Activated naive CD4-positive, alpha-beta T cell treated with anti-CD3 and anti-CD28 coated beads, Interleukin-2, amount 10 ng/mL, durations not matched to agents 7 days and 5 days (primary cell): ENCODE measurements at regions of chr12 and their contacts with region 1.

Region 1: DNA sequence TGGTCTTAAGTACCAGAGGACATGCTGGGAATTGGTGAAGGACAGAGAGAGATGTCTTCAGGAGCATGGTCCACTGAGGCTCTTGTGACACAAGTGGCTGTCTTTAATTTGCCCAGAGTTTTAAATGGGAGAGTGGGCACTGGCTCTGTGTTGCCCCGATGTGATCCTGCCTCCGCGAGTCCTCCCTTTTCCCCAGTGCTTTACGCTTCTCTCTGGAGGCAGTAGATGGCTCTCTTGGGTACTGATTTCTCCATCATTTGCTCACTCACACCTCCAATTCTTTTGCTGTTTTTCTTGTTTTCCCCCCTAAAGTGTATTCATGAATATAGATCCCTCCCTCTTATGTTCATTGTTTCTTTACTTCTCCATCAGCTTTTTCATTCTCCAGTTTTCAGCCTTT is 74.3 kb downstream of the EMP1 start:
- DNase-seq: no peak
- H3K4me3 Mint-ChIP-seq: no peak overlapping the region
- H3K27ac Mint-ChIP-seq: no peak overlapping the region
- H3K4me1 Mint-ChIP-seq: no peaks in the 10 kb centered on the region
- H3K27me3 Mint-ChIP-seq: peaks cover 34% of the 10 kb centered on the region

Region 2: DNA sequence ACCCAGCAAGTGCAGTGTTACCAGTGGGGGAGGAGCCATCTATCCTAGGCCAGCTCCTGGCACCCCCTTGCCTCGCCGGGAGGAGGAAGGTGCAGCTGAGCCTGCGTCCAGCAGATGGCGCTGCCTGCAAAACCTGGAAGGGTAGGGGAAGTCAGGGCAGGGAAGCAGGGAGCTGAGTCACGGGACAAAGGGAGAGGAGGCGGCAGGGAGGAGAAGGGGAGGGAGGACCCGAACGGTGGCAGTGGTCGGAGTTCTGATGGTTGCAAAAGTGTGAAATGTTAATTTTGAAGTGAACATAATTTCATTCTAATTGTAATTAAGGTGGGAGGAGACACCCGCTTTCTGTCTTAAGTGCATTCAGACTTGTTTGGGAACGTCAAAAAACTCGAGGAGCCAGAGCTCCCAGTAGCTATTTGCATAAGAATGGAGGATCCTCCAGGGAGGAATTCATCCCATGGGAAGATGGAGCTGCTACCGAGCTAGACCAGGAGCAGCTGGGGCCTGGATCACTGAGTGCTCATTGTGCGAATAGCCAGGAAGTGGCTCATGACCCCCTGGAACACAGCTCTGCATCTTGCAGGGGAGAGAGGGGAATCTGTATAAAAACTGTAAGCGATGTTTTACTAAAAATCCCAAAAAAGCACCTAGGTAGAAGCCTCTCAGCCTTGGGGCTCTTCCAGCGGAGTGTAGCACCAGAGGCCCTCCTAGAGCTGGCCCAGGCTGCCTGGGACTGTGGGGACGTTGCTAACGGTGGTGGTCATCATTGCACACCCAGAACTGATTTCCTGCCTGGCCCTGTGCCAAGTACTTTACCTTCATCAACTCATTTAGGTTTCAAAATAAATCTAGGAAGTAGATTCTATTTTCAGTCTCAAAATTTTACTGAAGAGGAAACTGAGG is 14.8 kb before region 1 on chr12:
- CTCF ChIA-PET with region 1: interaction called, 11 read pairs
- DNase-seq: peak; percentile 85
- H3K4me3 Mint-ChIP-seq: no peak overlapping the region
- H3K27ac Mint-ChIP-seq: no peak overlapping the region
- H3K4me1 Mint-ChIP-seq: peaks cover 2% of the 10 kb centered on the region
- H3K27me3 Mint-ChIP-seq: peaks cover 11% of the 10 kb centered on the region

Region 3: DNA sequence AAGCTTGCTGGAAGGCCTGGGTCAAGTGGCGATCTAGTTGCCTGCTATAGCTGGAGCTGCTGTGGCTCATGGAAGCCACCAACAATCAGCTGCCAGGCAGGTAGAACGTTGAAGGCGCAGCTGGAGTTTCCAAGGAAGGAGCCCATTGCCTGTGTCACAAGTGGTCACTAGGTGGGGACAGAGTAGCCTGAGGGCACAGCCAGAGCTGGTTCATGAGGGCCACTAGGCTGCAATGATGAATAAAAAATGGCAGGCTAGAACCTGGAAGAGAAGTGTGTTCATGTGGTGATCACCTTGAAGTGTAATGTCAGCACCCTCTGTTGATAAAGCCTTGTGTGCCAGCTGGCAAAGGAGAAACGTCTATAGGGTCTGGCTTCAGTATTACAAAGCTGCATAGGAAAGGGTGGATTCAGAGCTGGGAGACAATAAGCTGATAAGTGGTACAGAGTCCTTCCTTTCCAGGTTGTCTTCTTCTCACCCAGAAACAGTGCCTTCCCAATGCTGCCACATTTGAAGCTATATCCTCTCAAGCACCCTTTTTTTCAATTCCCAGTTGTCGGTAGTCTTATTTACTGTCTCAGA is 91.5 kb after region 1 on chr12:
- CTCF ChIA-PET with region 1: no interaction called
- DNase-seq: peak; percentile 66
- H3K4me3 Mint-ChIP-seq: no peak overlapping the region
- H3K27ac Mint-ChIP-seq: no peak overlapping the region
- H3K4me1 Mint-ChIP-seq: no peaks in the 10 kb centered on the region
- H3K27me3 Mint-ChIP-seq: peaks cover 10% of the 10 kb centered on the region